Panc1 (cell line): ENCODE measurements at regions of chr17 and their contacts with region 1.

Region 1: DNA sequence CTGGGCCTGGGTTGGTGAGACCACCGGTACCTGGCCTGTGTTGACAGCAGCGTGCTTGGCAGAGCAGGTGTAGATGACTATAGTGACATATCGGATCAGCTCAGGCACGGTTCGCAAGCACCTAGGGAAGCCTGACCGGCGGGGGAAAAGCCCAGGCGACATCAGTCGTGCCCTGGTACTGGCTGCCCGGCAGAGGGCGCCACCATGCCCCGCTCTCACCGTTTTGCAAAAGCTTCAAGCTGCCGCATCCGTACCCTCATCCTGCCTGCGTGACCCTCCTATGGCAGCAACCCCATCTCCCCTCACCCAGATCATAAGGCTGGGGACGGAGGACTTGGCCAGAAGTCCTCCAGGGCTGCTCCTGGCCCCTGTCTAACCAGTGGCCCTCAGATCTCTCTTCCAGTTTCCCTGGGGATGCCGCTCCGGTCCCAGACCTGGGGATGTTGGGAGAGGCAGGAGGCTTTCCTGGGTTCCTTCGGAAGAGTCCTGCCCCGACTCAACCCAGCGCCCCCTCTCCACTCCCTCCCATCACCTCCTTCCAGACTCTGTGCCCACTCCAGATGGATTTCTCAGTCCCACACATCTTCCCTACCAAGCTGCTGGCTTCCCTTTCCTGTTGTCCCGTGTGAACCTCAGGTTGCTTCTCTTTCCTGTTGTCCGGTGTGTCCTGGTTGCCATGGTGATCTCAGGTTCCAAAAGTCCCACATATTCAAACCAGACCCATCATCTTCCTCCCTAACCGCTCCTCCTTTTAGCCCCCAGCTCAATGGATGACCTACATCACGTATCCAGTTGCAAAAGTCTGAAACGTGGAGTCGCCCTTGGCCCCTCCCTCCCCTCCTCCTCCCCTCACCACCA is 13.7 kb downstream of the ALOX12B start:
- DNase-seq: peak; percentile 47
- ATAC-seq: peak; percentile 90
- H3K4me3 ChIP-seq: peak overlapping the region; percentile 16 to 38
- H3K27ac ChIP-seq: no peak overlapping the region
- H3K4me1 ChIP-seq: no peaks in the 10 kb centered on the region; the same call in 1 of the 2 replicates
- H3K27me3 ChIP-seq: no peaks in the 10 kb centered on the region; the same call in 1 of the 2 replicates
- CTCF ChIP-seq: peak; percentile 97

Region 2: GRCh38 chr17:8300627-8301242 is 226.9 kb after region 1 on chr17:
- CTCF ChIA-PET with region 1: interaction called, 10 read pairs
- POLR2A ChIA-PET with region 1: no interaction called
- in situ Hi-C with region 1: no loop called
- intact Hi-C with region 1: no loop called
- DNase-seq: peak; percentile 72
- ATAC-seq: peak; percentile 97
- H3K4me3 ChIP-seq: no peak overlapping the region
- H3K27ac ChIP-seq: no peak overlapping the region
- H3K4me1 ChIP-seq: no peaks in the 10 kb centered on the region
- H3K27me3 ChIP-seq: no peaks in the 10 kb centered on the region
- CTCF ChIP-seq: peak; percentile 89